ENCODE measurements at regions of chr1 and their contacts with region 1.

Region 1: DNA sequence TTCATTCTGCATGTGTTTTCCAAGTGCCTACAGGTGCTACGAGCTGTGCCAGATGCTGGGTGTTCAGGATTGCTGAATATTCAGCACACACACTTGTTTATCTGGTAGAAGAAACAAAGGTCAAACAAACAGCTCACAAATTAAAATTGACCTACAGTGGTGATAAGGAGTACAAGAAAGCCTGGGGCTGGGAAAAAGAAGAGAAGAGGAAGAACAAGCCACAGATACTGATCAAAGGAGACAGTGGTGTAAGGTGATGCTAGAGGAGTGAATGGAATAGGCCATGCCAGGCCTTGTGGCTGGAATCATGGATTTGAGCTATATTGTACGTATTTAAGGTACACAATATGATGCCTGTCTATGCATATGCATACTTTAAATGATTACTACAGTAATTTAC is 16.7 kb downstream of the BECN2 start:
- DNase-seq: no peak
- H3K4me3 ChIP-seq: no peak overlapping the region
- H3K27ac ChIP-seq: no peak overlapping the region
- H3K4me1 ChIP-seq: no peaks in the 10 kb centered on the region
- H3K27me3 ChIP-seq: no peaks in the 10 kb centered on the region
- CTCF ChIP-seq: no peak
- POLR2A ChIP-seq: no peak

Region 2: GRCh38 chr1:241902391-241903065 is 71.8 kb before region 1 on chr1:
- intact Hi-C with region 1: loop called (anchors 2 kb)
- DNase-seq: no peak
- H3K4me3 ChIP-seq: no peak overlapping the region
- H3K27ac ChIP-seq: no peak overlapping the region
- H3K4me1 ChIP-seq: no peaks in the 10 kb centered on the region
- H3K27me3 ChIP-seq: no peaks in the 10 kb centered on the region
- CTCF ChIP-seq: no peak
- POLR2A ChIP-seq: no peak